Naive thymus-derived CD8-positive, alpha-beta T cell (primary cell): ENCODE measurements at regions of chr2 and their contacts with region 1.

Region 1: DNA sequence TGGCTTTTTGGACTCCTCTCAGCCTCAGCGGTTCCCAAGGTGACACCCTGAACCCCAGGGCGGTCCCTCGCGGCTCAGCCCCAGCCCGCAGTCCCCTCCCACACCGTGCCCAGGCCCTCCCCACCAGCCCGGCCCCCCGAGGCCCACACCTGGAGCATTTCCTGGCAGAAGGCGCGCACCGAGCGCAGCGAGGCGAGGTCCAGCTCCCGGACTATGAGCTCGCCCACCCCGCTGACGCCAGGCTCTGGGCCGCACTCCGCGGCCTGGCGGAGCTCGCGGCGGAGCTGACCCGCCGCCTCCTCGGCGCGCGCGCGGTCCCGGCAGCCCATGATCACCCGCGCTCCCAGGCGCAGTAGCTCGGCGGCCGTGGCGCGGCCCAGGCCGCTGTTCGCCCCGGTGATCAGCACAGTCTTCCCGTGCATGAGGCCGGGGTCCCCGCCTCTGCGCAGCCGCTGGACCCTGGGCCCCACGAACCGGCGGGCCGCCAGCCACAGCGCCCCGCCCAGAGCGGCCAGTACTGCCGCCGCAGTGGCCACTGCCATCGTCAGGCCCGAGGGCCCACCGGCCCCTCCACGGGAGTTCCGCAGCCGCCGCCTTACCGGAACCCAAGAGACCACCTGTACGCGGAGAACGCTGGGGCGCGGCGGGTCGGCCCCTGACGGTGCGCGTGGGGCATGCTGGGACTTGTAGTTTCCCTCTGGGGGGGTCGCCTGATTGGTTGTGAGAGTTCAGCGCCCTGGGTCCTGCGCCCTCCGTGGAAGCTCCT is at the start of gene RDH14:
- DNase-seq: peak; percentile 85 to 97 (median 96)
- ATAC-seq: peak; percentile 88 to 89
- H3K4me3 Mint-ChIP-seq: peak within 1 kb of the TSS; percentile 82 to 97 (median 94)
- H3K27ac Mint-ChIP-seq: peak within 1 kb of the TSS; percentile 88 to 99 (median 98)
- H3K4me1 Mint-ChIP-seq: peaks cover 27 to 55% (median 50%) of the 10 kb centered on the region in 4 donors
- H3K27me3 Mint-ChIP-seq: no peaks in the 10 kb centered on the region
- polyA plus RNA-seq, gene RDH14: 46.3 to 56.2 (median 52.1) TPM

Region 2: DNA sequence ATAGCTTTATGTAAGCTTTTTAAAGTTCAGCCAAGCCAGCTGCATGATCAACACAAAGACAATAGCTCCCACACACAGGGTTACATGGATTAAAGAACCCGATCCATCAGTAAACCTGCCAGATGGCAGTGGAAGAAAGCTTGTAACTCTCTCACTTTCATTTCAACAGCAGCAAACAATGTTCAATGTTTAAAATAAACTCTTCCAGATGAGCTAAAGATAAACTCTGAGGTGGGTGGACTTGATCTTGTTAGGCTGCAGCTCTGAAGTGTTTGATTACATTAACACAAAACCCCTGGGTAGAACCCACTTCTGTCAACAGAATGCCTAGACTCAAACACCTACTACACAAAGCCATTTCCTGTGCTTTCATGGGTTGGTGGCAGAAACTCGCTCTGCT is 13.6 kb before region 1 on chr2:
- POLR2A ChIA-PET with region 1: interaction called, 13 read pairs
- DNase-seq: peak in 2 of 10 donors; percentile 37 to 50
- ATAC-seq: peak; percentile 72 to 88
- H3K4me3 Mint-ChIP-seq: peak overlapping the region in 8 of 10 donors; percentile 2 to 70 (median 48)
- H3K27ac Mint-ChIP-seq: peak overlapping the region; percentile 10 to 88 (median 54)
- H3K4me1 Mint-ChIP-seq: peaks cover 18 to 50% (median 46%) of the 10 kb centered on the region in 4 donors
- H3K27me3 Mint-ChIP-seq: peaks cover 0 to 2% (median 0%) of the 10 kb centered on the region in 5 donors

Region 3: DNA sequence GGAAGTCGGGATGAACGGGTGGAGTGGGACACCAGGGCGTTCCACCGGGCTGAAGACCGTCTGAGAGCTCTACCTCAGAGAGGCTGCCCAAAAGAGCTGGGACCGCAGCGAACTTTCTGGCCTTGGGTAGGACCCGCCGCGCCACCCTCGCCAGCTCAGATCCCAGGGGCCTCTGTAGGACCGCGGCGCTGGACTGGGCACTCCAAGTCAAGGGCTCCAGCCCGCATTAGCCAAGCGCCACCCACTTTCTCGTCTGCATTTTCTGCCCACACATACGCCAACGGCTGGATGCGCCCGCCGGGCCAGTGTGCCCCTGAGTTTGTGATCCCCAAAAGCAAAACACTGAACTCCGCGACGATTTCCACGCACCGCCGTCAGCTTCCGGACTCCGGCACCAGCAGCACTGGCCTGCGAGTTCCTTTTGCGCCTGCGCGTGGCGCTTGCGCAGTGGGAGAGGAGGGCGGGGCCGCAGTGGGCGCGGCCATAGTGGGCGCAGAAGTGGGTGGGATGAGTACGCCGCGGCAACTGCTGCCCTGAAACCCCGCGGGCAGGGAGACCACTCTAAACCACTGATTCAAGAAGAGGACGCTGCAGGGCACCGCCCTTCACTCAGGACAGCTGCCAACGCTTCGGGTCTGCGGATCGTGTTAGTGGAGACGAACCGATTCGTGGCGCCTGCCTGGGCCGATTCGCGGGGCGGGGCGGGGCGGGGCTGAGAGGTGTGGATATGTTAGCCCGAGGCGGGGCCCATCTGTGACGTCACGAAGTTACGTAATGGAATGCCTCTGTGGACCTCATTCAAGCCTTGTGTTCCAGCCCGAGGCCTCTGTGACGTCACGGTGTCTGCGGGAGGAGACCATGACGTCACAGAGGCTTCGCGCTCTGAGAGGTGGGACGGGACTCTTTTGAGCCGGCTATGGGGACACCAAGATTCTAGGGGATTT is 787.7 kb after region 1 on chr2:
- POLR2A ChIA-PET with region 1: interaction called, 21 read pairs
- DNase-seq: peak; percentile 90 to 100 (median 96)
- ATAC-seq: peak; percentile 86 to 89
- H3K4me3 Mint-ChIP-seq: peak overlapping the region; percentile 93 to 99 (median 96)
- H3K27ac Mint-ChIP-seq: peak overlapping the region; percentile 96 to 99 (median 98)
- H3K4me1 Mint-ChIP-seq: peaks cover 17 to 44% (median 33%) of the 10 kb centered on the region in 4 donors
- H3K27me3 Mint-ChIP-seq: peaks cover 16 to 40% (median 29%) of the 10 kb centered on the region in 5 donors

Region 4: DNA sequence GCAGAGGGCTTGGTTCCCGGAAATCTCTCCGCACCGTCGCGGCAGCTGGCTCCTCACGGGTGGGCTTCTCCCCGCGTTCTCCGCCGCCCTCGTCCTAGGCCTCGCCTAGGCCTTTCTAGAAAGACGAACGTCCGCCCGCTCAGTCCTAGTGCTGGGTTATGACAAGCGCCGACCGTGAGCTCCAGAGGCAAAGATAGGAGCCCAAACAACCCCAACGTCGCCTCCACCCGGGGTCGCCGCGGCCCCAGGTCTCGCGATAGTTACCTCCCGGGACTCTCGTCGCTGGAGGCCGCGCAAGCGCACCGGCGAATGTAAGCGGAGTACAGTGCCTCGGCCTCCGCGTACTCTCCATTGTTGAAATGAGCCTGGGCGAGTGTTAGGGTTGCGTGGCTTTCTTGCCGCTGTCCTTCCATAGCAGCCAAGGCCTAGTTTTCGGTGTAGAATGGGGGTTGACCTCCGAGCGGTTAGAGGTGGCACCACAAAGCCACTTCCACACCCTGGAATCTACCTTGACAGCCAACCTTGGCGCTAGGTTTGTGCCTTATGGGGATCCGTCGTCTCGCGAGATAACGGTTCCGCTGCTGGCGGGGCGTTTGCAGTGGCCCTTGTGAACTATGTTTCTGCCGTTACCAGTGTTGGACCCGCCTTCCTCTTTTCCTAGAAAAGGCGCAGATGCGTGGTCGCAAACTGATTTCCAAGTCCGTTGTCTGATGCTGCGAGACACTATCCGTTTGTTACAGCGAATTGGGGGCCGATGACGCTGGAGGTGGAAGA is 1341.4 kb after region 1 on chr2 and contains the start of gene TTC32:
- POLR2A ChIA-PET with region 1: interaction called, 21 read pairs
- DNase-seq: peak; percentile 88 to 99 (median 94)
- ATAC-seq: peak; percentile 86 to 87
- H3K4me3 Mint-ChIP-seq: peak within 1 kb of the TSS; percentile 93 to 99 (median 96)
- H3K27ac Mint-ChIP-seq: peak within 1 kb of the TSS; percentile 94 to 100 (median 99)
- H3K4me1 Mint-ChIP-seq: peaks cover 17 to 43% (median 30%) of the 10 kb centered on the region in 4 donors
- H3K27me3 Mint-ChIP-seq: peaks cover 0 to 8% (median 0%) of the 10 kb centered on the region in 5 donors
- polyA plus RNA-seq, gene TTC32: 21.9 to 37.0 (median 31.0) TPM